Vagina (tissue), 2 donors: ENCODE measurements at regions of chr2 and their contacts with region 1.

Region 1: DNA sequence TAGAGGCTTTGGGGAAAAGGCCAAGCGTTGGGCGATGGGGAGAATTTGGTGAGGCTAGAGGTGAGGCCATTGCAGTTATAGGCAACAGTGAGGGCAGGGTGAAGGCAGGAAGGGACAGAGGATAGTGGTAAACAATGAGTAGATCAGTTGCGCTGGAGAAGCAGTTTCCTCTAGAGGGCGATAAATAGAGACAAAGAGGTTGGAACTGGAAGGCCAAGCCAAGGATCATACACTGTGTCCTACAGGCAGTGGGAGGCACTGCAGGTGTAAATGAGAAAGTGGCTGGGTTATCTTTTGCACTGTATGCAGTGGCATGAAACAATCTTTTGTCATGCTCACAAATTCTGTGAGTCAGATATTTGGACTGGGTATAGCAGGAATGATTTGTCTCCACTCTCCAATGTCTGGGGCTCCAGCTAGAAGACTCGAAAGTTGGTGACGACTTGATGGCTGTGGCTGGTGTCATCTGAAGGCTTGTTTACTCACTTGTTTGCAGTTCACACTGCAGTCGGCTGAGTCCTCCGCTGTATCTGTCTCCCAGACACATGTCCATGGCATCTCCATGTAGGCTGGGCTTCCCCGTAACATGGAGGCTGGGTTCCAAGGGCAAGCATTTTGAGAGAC is 82.1 kb downstream of the TNP1 start:
- DNase-seq: no peak
- H3K4me3 ChIP-seq: no peak overlapping the region
- H3K27ac ChIP-seq: no peak overlapping the region
- H3K4me1 ChIP-seq: peaks cover 11% of the 10 kb centered on the region
- H3K27me3 ChIP-seq: no peaks in the 10 kb centered on the region
- CTCF ChIP-seq: peak in 1 of 3 experiments; percentile 16
- POLR2A ChIP-seq: no peak

Region 2: DNA sequence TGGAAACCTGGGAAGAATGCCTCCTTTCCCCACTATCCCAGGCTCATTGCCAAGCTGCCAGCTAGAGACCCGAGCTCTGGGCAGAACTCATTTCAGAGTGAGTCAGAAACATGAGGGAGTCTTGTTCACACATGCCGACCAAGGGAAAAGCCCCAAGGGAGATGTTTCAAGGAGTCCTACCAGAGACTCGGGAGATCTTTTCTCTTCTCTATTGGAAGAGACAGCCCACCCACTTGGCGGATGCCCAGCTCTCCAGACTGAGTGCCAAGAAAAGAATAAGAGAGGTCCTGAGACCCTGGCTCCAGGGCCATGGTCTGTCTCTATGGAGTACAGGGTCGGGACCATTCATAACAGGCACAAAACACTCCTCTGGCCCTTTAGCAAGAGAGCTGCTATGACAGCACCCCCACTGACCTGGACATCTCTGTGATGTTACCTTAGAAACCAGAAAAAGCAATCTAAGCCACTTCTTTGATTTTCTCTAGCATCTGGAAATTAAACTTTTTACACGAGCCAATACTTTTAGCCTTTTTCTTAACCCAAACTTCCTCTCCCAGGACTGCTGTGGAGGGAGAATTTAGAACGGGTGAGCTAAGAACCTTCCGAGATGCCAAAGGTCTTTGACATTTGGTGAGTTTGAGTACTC is 63.9 kb before region 1 on chr2:
- intact Hi-C with region 1: loop called (anchors 5 kb)
- DNase-seq: no peak
- H3K4me3 ChIP-seq: no peak overlapping the region
- H3K27ac ChIP-seq: peak overlapping the region; percentile 81
- H3K4me1 ChIP-seq: peaks cover 79% of the 10 kb centered on the region
- H3K27me3 ChIP-seq: no peaks in the 10 kb centered on the region
- CTCF ChIP-seq: no peak
- POLR2A ChIP-seq: no peak